Pancreas (tissue), 10 donors: ENCODE measurements at regions of chr9 and their contacts with region 1.

Region 1: GRCh38 chr9:33466565-33467495 is 6.9 kb downstream of the NOL6 start:
- DNase-seq: peak; percentile 31 to 95 (median 76)
- ATAC-seq: peak; percentile 76 to 92 (median 86)
- H3K4me3 ChIP-seq: no peak overlapping the region
- H3K27ac ChIP-seq: no peak overlapping the region
- H3K4me1 ChIP-seq: peaks cover 0 to 1% (median 0%) of the 10 kb centered on the region in 3 donors
- H3K27me3 ChIP-seq: no peaks in the 10 kb centered on the region
- CTCF ChIP-seq: peak; percentile 87 to 94 (median 90)

Region 2: GRCh38 chr9:33293782-33294181 is 173.0 kb before region 1 on chr9:
- intact Hi-C with region 1: no loop called
- DNase-seq: no peak
- ATAC-seq: no peak
- H3K4me3 ChIP-seq: no peak overlapping the region
- H3K27ac ChIP-seq: no peak overlapping the region
- H3K4me1 ChIP-seq: peaks cover 16 to 63% (median 31%) of the 10 kb centered on the region in 3 donors
- H3K27me3 ChIP-seq: no peaks in the 10 kb centered on the region
- CTCF ChIP-seq: no peak

Region 3: GRCh38 chr9:33306037-33306436 is 160.8 kb before region 1 on chr9:
- intact Hi-C with region 1: loop called in 1 of 3 experiments (anchors 10 kb)
- DNase-seq: no peak
- ATAC-seq: no peak
- H3K4me3 ChIP-seq: no peak overlapping the region
- H3K27ac ChIP-seq: no peak overlapping the region
- H3K4me1 ChIP-seq: peaks cover 0 to 16% (median 14%) of the 10 kb centered on the region in 3 donors
- H3K27me3 ChIP-seq: no peaks in the 10 kb centered on the region
- CTCF ChIP-seq: no peak

Region 4: DNA sequence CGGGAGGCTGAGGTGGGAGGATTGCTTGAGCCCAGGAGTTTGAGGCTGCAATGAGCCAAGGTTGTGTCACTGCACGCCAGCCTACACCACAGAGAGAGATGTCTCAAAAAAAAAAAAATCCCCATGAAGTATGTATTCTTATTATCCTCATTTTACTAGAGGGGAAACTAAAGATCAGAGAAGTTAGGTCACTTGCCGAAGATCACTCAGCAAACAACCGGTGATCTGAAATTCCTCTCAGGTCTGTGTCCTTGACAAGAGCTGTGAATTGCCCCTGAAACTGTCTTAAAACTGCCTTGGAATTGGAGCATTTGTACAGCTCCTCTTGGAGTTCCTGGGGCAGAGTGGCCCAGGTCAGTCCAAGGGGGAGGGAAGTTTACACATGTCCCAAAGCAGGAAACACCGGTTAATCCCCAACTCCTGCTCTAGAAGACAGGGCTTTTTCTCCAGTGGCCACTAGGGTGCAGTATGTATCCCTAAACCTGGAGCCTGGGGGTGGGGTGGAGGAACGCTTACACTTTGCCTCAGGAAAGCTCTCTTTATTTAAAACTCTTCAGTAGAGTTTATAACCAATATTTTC is 92.1 kb before region 1 on chr9:
- intact Hi-C with region 1: loop called in 1 of 3 experiments (anchors 10 kb)
- DNase-seq: peak in 5 of 6 donors; percentile 59 to 78 (median 65)
- ATAC-seq: peak; percentile 88 to 99 (median 96)
- H3K4me3 ChIP-seq: no peak overlapping the region
- H3K27ac ChIP-seq: no peak overlapping the region
- H3K4me1 ChIP-seq: no peaks in the 10 kb centered on the region
- H3K27me3 ChIP-seq: no peaks in the 10 kb centered on the region
- CTCF ChIP-seq: peak; percentile 63 to 86 (median 73)

Region 5: GRCh38 chr9:33404788-33405362 is 62.0 kb before region 1 on chr9:
- intact Hi-C with region 1: loop called in 1 of 3 experiments (anchors 10 kb)
- DNase-seq: no peak
- ATAC-seq: peak in 1 of 4 donors; percentile 43
- H3K4me3 ChIP-seq: no peak overlapping the region
- H3K27ac ChIP-seq: no peak overlapping the region
- H3K4me1 ChIP-seq: no peaks in the 10 kb centered on the region
- H3K27me3 ChIP-seq: no peaks in the 10 kb centered on the region
- CTCF ChIP-seq: no peak